ENCODE measurements at regions of chr18 and their contacts with region 1.

Region 1: DNA sequence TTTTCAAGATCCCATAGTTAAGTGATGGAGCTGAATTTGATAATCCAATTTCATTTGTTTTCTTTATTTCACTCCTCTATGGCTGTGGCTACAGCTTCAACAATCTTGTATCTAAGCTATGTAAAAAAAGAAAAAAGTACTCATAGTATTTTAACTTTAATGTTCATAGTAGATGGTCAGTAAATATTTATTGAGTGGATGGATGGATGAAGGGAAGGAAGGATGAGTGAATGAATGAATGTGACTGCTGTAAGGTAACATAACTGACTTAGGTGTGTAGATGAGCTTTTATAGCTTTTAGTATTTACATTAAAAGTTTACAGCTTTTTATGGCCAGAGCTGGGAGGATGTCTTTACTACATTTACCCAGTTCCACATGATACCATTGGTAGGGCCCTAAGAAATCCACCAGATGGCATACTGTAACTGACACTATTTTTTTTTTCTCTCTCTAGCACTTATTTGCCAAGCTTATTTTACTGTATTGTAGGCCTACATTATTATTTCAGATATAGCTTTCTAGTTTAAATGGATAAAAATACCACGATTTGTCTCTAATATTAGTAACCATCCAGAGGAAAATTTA is 13.4 kb upstream of the HRH4 start:
- H3K4me3 Mint-ChIP-seq: no peak overlapping the region
- H3K27ac Mint-ChIP-seq: no peak overlapping the region
- H3K4me1 Mint-ChIP-seq: peaks cover 15% of the 10 kb centered on the region
- H3K27me3 Mint-ChIP-seq: no peaks in the 10 kb centered on the region

Region 2: DNA sequence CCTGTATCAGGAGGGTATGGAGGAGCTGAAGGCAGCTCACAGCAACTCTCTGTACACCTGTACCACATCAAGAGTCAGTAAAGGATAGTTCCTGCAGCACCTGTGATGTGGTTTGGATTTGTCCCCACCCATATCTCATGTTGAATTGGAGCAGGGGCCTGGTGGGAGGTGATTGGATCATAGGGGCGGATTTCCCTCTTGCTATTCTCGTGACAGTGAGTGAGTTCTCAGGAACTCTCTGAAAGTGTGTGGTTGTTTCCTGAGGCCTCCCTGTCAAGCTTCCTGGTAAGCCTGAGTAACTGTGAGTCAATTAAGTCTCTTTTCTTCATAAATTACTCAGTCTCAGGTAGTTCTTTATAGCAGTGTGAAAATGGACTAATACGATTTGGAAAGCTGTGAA is 78.3 kb before region 1 on chr18:
- intact Hi-C with region 1: loop called (anchors 5 kb)
- H3K4me3 Mint-ChIP-seq: no peak overlapping the region
- H3K27ac Mint-ChIP-seq: peak overlapping the region; percentile 60
- H3K4me1 Mint-ChIP-seq: peaks cover 51% of the 10 kb centered on the region
- H3K27me3 Mint-ChIP-seq: no peaks in the 10 kb centered on the region

Region 3: DNA sequence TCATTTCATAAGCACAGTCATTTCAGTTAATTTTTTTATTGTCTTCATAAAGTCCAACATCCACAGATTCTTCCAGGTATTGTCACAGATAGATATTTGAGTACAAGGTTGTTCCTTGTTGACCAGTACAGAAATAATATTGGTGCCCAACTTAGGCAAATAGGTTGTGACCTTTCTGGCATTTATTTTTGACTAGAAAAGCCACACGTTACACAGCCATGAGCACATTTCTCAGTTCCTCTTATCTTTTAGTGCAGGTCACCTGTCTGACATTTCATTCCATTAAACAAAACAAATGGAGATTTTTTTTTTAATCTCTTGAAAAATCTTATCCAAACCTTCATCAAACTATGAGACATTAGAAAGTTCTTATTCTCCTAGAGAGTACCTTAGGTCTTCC is 476.1 kb after region 1 on chr18:
- intact Hi-C with region 1: no loop called
- H3K4me3 Mint-ChIP-seq: no peak overlapping the region
- H3K27ac Mint-ChIP-seq: no peak overlapping the region
- H3K4me1 Mint-ChIP-seq: no peaks in the 10 kb centered on the region
- H3K27me3 Mint-ChIP-seq: no peaks in the 10 kb centered on the region

Measured in dendritic cell treated with granulocyte-macrophage colony-stimulating factor and Interleukin-4, amounts not matched to agents 40 ng/mL and 50 ng/mL, for 4 days (primary cell).